ENCODE measurements at regions of chr14 and their contacts with region 1.

Region 1: GRCh38 chr14:35121887-35122695 is at the starts of genes PPP2R3C and PRORP:
- DNase-seq: peak; percentile 86 to 93 (median 90)
- H3K4me3 ChIP-seq: peak within 1 kb of the TSS; percentile 66 to 99 (median 87)
- H3K27ac ChIP-seq: peak within 1 kb of the TSS; percentile 92 to 99 (median 98)
- H3K27me3 ChIP-seq: no peaks in the 10 kb centered on the region
- CTCF ChIP-seq: peak in 10 of 56 donors; percentile 2 to 31 (median 16)
- total RNA-seq, gene PPP2R3C: 24.5 to 46.9 (median 33.9) TPM
- total RNA-seq, gene PRORP: 13.9 to 33.4 (median 22.8) TPM

Region 2: DNA sequence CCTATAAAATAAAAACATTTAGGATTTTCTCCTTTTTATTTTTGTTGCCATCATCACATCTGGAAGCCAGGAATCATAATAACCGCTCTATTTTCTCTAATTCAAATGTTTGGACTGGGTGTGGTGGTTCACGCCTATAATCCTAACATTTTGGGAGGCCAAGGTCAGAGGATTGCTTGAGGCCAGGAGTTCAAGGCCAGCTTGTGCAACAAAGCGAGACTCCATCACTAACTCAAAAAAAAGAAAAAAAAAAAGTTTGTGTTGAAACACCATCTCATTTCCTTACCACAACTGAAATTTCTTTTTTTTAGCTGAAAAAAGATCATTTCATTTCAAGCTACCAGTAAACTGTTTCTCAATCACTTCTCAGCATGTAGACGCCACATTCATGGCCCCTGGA is 238.1 kb before region 1 on chr14:
- intact Hi-C with region 1: no loop called
- DNase-seq: no peak
- H3K4me3 ChIP-seq: no peak overlapping the region
- H3K27ac ChIP-seq: no peak overlapping the region
- H3K27me3 ChIP-seq: no peaks in the 10 kb centered on the region
- CTCF ChIP-seq: no peak

Region 3: GRCh38 chr14:35292051-35292769 is 170.1 kb after region 1 on chr14 and contains the start of gene PSMA6:
- intact Hi-C with region 1: loop called (anchors 5 kb)
- DNase-seq: peak; percentile 99 to 100 (median 99)
- H3K4me3 ChIP-seq: peak within 1 kb of the TSS; percentile 65 to 99 (median 93)
- H3K27ac ChIP-seq: peak within 1 kb of the TSS; percentile 41 to 98 (median 89)
- H3K27me3 ChIP-seq: no peaks in the 10 kb centered on the region
- CTCF ChIP-seq: peak in 30 of 56 donors; percentile 6 to 56 (median 30)
- total RNA-seq, gene PSMA6: 60.5 to 148 (median 104) TPM

Measured in dorsolateral prefrontal cortex (tissue), 120 donors.